Stomach (tissue), 19 donors: ENCODE measurements at regions of chr6 and their contacts with region 1.

Region 1: DNA sequence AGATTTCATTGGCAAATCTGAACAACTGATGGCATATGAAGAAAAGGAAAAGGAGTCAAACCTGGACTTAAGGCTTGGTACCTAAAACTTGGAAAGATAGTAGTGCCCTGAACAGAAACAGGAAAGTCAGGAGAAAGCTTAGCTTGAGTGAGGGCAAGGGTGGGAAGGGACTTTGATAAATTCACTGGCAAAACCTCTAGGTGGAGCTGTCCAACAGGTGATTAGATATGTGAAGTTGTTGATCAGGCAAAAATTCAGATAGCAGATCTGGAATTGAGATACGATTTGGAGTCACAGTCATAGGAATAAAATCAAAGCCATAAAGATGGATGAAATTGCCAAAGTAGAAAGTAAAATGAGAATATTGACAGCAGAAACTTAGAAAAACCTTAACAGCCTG is 16.1 kb upstream of the ZNF292 start:
- DNase-seq: peak in 1 of 2 donors; percentile 52
- H3K4me3 ChIP-seq: no peak overlapping the region
- H3K27ac ChIP-seq: no peak overlapping the region
- H3K4me1 ChIP-seq: no peaks in the 10 kb centered on the region
- H3K27me3 ChIP-seq: peaks cover 0 to 7% (median 0%) of the 10 kb centered on the region in 3 donors
- CTCF ChIP-seq: peak in 5 of 7 experiments; percentile 43 to 84 (median 73)
- EP300 ChIP-seq: no peak
- POLR2A ChIP-seq: no peak

Region 2: GRCh38 chr6:87186360-87186759 is 47.1 kb after region 1 on chr6:
- intact Hi-C with region 1: no loop called
- DNase-seq: no peak
- H3K4me3 ChIP-seq: no peak overlapping the region
- H3K27ac ChIP-seq: no peak overlapping the region
- H3K4me1 ChIP-seq: peaks cover 0 to 16% (median 5%) of the 10 kb centered on the region in 4 donors
- H3K27me3 ChIP-seq: no peaks in the 10 kb centered on the region
- CTCF ChIP-seq: no peak
- EP300 ChIP-seq: no peak
- POLR2A ChIP-seq: no peak

Region 3: DNA sequence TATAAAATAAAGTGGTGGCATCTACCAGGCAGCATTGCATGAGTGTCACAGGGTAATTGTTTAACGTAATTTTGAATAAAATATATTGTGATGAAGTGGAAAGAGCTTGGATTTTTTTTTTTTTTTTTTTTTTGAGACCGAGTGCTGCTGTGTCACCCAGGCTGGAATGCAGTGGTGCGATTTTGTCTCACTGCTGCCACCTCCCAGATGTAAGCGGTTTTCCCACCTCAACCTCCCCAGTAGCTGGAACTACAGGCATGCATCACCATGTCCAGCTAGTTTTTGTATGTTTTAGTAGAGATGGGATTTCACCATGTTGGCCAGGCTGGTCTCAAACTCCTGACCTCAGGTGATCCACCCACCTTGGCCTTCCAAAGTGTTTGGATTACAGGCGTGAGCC is 102.1 kb after region 1 on chr6:
- intact Hi-C with region 1: loop called (anchors 10 kb)
- DNase-seq: no peak
- H3K4me3 ChIP-seq: no peak overlapping the region
- H3K27ac ChIP-seq: no peak overlapping the region
- H3K4me1 ChIP-seq: peaks cover 0 to under 1% (median 0%) of the 10 kb centered on the region in 4 donors
- H3K27me3 ChIP-seq: no peaks in the 10 kb centered on the region
- CTCF ChIP-seq: no peak
- EP300 ChIP-seq: no peak
- POLR2A ChIP-seq: no peak

Region 4: GRCh38 chr6:87472525-87473418 is 333.5 kb after region 1 on chr6 and contains the start of gene SLC35A1:
- intact Hi-C with region 1: no loop called
- DNase-seq: peak; percentile 86 to 95
- H3K4me3 ChIP-seq: peak within 1 kb of the TSS; percentile 79 to 92 (median 86)
- H3K27ac ChIP-seq: peak within 1 kb of the TSS; percentile 91 to 97 (median 95)
- H3K4me1 ChIP-seq: peaks cover 8 to 37% (median 20%) of the 10 kb centered on the region in 4 donors
- H3K27me3 ChIP-seq: no peaks in the 10 kb centered on the region
- CTCF ChIP-seq: peak in 3 of 7 experiments; percentile 16 to 49 (median 22)
- EP300 ChIP-seq: no peak
- POLR2A ChIP-seq: peak in 2 of 4 donors; percentile 6 to 40
- total RNA-seq, gene SLC35A1: 2.2 to 117 (median 17.0) TPM